ENCODE measurements at regions of chr6 and their contacts with region 1.

Region 1: DNA sequence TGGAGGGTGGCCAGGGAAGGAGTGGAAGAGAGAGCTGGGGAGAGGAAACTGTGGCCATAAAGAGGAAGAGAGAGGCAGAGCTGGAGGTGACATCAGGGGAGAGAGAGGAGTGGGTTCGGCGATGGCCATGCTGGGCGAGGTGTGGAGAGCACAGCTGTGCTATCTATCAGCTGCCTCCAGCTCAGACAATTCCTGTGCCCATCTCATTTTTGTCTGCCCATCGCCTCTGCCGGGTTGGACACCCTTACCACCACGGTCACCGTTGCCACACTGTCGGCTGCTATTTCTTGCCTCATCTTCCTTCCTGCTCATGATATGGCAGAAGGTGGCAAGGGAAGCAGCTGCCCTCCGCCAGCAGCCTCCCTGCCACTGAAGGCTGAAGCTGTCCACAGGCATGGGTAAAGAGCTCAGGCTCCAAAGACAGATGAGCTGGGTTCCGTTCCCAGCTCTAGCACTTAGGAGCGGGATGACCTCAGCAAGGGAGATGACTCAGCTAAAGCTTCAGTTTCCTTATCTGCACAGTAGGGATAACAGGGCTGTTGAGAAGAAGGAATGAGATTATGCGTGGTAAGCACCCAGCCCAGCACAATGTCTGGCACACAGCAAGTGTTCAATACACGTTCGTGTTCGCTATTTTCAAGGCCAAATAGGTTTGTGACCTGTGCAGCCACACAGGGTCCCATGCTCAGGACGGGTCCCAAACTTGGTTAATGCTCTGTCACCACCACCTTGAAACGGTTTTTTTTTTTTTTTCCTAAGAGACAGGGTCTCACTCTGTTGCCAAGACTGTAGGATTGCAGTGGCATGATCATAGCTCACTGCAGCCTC is 21.9 kb upstream of the TAF8 start:
- DNase-seq: peak in 1 of 14 experiments; percentile 55
- ATAC-seq: peak; percentile 16
- H3K4me3 ChIP-seq: no peak overlapping the region
- H3K4me3 Mint-ChIP-seq: peak overlapping the region; percentile 84
- H3K27ac ChIP-seq: peak overlapping the region; percentile 36 to 50
- H3K27ac Mint-ChIP-seq: peak overlapping the region; percentile 94
- H3K4me1 ChIP-seq: peaks cover 99% of the 10 kb centered on the region
- H3K4me1 Mint-ChIP-seq: peaks cover 90% of the 10 kb centered on the region
- H3K27me3 ChIP-seq: no peaks in the 10 kb centered on the region
- H3K27me3 Mint-ChIP-seq: no peaks in the 10 kb centered on the region
- CTCF ChIP-seq: no peak

Region 2: DNA sequence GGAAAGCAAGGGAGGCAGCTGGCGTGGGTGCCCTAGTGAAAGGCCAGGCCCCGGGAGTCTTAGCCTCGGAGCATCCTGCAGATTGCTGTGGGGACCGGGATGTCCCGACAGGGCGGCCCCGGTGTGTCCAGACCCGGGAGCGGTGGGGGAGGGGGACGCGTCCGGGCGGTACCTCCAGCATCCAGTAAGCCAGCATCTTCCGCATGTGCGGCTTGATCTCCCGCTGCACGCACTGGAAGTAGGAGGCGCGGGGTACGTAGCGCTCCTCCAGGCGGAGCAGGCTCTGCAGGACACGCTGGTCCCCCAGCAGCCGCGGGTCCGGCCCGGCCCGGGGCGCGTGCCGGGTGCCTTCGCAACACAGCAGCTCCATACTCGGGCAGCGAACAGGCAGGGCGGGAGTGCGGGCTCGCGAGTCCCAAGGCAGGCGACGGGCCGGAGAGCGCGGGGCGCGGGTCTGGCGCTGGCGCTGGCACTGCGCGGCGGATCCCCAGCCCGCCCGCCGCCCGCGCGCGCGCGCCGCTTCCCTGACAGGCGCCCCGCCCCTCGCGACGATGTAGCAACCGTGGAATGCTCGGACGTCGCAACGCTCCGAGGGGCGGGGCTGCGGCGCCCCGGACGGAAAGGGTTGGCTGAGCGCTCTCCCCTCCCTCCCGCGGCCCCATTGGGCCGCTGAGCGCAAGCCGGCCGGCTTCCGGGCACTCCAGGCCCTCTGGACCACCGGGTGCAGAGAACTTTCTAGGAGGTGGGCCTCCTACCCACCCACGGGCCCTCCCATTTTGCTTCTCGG is 87.0 kb before region 1 on chr6 and contains the start of gene CCND3:
- CTCF ChIA-PET with region 1: interaction called, 3 read pairs
- POLR2A ChIA-PET with region 1: interaction called, 20 read pairs
- intact Hi-C with region 1: loop called in 1 of 2 experiments (anchors 5 kb)
- DNase-seq: peak; percentile 63 to 92 (median 81)
- ATAC-seq: peak; percentile 55
- H3K4me3 ChIP-seq: peak within 1 kb of the TSS; percentile 96
- H3K4me3 Mint-ChIP-seq: peak within 1 kb of the TSS; percentile 97
- H3K27ac ChIP-seq: peak within 1 kb of the TSS; percentile 68 to 74
- H3K27ac Mint-ChIP-seq: peak within 1 kb of the TSS; percentile 93
- H3K4me1 ChIP-seq: peaks cover 72% of the 10 kb centered on the region
- H3K4me1 Mint-ChIP-seq: peaks cover 80% of the 10 kb centered on the region
- H3K27me3 ChIP-seq: no peaks in the 10 kb centered on the region
- H3K27me3 Mint-ChIP-seq: no peaks in the 10 kb centered on the region
- CTCF ChIP-seq: no peak
- total RNA-seq, gene CCND3: 247 to 248 TPM

Measured in CD4-positive, alpha-beta T cell (primary cell).